ENCODE measurements at regions of chr17 and their contacts with region 1.

Region 1: DNA sequence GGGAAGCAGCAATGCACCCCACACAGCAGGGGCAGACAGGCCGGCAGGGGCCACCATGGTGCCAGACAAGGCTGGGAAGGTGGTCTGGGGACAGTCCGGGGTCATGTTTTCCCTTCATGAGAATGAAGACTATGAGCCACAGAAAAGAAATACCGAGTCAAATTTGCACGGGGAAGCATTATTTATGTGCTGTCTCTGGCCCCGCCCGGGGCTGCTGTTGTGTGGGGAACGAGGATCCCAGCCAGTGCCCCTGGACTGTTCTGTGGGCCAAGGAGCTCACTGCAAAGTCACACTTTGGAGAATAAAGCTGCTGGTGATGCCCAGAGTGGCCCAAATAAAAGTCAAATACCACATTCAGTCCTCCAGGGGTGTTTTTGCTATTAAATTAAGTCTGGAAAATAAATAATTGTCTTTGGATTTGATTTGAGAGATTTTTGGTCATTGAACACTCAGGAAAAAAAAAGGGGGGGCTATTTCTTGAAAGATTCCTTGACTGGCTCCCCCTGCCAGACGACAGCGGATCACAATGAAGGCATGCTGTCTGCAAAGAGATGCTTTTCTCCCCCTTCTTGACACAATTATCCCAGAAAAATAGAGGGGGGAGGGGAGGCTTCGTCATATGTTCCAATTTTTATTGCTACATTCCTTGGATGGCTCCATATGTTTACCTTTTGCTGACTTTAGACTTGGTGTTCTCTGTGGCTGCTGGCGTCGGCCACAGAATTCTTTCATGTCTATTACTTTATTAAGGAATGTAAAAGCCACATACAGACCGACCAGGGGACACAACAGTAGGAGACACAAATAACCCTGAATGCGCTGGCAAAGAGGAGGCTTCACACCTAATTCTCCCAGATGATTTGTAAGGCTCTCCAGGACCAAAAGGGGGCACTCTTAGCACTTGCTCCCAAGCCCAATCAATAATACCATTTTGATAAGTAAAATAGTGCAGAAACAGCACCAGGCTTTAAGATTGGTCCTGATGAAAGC is 27.1 kb upstream of the ANKFN1 start:
- DNase-seq: no peak
- H3K4me3 ChIP-seq: no peak overlapping the region
- H3K27ac ChIP-seq: no peak overlapping the region
- H3K4me1 ChIP-seq: no peaks in the 10 kb centered on the region
- H3K27me3 ChIP-seq: peaks cover 0 to 7% (median 0%) of the 10 kb centered on the region in 7 donors
- CTCF ChIP-seq: peak in 6 of 11 experiments; percentile 20 to 36 (median 30)
- POLR2A ChIP-seq: no peak

Region 2: GRCh38 chr17:55814377-55814776 is 311.7 kb before region 1 on chr17:
- intact Hi-C with region 1: no loop called
- DNase-seq: no peak
- H3K4me3 ChIP-seq: no peak overlapping the region
- H3K27ac ChIP-seq: no peak overlapping the region
- H3K4me1 ChIP-seq: peaks cover 0 to 7% (median 3%) of the 10 kb centered on the region in 6 donors
- H3K27me3 ChIP-seq: no peaks in the 10 kb centered on the region
- CTCF ChIP-seq: no peak
- POLR2A ChIP-seq: no peak

Region 3: GRCh38 chr17:56478836-56479447 is 352.8 kb after region 1 on chr17:
- intact Hi-C with region 1: loop called (anchors 10 kb)
- DNase-seq: no peak
- H3K4me3 ChIP-seq: no peak overlapping the region
- H3K27ac ChIP-seq: no peak overlapping the region
- H3K4me1 ChIP-seq: no peaks in the 10 kb centered on the region
- H3K27me3 ChIP-seq: peaks cover 0 to 4% (median 0%) of the 10 kb centered on the region in 7 donors
- CTCF ChIP-seq: peak in 8 of 11 experiments; percentile 18 to 48 (median 33)
- POLR2A ChIP-seq: no peak

Measured in spleen (tissue), 13 donors.